MCF 10A (cell line): ENCODE measurements at regions of chr14 and their contacts with region 1.

Region 1: GRCh38 chr14:63852817-63853731 is at the start of gene SYNE2:
- DNase-seq: peak; percentile 77
- H3K4me3 Mint-ChIP-seq: peak within 1 kb of the TSS; percentile 89
- H3K27ac Mint-ChIP-seq: peak within 1 kb of the TSS; percentile 86
- H3K4me1 Mint-ChIP-seq: peaks cover 25% of the 10 kb centered on the region
- H3K27me3 Mint-ChIP-seq: no peaks in the 10 kb centered on the region
- CTCF ChIP-seq: no peak
- total RNA-seq, gene SYNE2: 51.2 and 67.4 TPM in 2 replicates

Region 2: DNA sequence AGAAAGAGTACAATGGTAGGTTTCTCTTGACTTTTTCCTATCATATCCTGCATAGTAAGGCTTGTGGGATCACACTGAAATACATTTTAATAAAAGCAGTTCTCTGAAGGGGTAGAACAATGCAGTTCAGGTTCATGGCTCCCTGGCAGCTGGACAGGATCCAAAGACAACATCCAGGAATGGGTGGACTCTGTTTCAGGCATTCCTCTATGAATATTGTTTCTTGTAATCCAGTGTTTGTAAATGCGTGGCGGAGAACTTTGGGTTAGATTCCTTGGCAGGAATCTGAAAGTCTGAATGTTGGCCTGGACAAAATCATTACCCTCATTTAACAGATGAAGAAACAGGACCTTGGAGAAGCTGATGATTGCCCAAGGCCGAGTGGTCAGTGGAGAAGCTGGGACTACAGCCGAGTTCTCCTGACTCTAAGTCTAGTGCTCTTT is 43.2 kb after region 1 on chr14:
- CTCF ChIA-PET with region 1: no interaction called
- POLR2A ChIA-PET with region 1: interaction called, 14 read pairs
- intact Hi-C with region 1: loop called (anchors 1 kb)
- DNase-seq: peak; percentile 96
- H3K4me3 Mint-ChIP-seq: no peak overlapping the region
- H3K27ac Mint-ChIP-seq: peak overlapping the region; percentile 47
- H3K4me1 Mint-ChIP-seq: peaks cover 43% of the 10 kb centered on the region
- H3K27me3 Mint-ChIP-seq: no peaks in the 10 kb centered on the region
- CTCF ChIP-seq: no peak

Region 3: DNA sequence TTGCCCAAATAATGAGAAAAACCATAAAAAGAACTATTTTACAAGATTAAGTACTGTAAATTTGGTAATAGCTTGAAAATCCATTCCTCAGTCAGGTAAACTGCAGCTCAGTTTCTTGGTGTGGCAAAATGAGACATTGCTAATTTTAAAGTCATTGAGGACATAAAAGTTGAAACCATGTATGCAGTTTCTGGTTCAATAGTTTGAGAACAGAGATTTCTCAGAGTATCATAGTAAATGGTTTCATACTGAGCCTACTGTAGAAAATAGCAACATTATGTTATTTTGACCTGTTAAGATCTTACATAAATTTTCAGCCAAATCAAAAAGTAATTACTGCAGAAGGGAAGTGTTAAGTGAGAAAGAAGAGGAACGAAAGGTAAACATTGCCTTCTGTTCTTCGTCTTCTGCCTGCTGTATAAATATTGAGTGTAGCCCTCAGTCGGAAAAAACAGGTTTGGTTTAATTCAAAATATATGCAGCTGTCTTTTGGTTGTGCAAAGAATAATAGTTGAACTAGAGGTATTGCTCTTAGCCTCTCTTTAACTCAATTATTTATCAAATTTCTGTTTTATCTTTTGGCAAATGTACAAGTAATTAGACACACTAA is 119.4 kb after region 1 on chr14:
- CTCF ChIA-PET with region 1: no interaction called
- POLR2A ChIA-PET with region 1: no interaction called
- intact Hi-C with region 1: no loop called
- DNase-seq: no peak
- H3K4me3 Mint-ChIP-seq: no peak overlapping the region
- H3K27ac Mint-ChIP-seq: no peak overlapping the region
- H3K4me1 Mint-ChIP-seq: no peaks in the 10 kb centered on the region
- H3K27me3 Mint-ChIP-seq: no peaks in the 10 kb centered on the region
- CTCF ChIP-seq: no peak

Region 4: DNA sequence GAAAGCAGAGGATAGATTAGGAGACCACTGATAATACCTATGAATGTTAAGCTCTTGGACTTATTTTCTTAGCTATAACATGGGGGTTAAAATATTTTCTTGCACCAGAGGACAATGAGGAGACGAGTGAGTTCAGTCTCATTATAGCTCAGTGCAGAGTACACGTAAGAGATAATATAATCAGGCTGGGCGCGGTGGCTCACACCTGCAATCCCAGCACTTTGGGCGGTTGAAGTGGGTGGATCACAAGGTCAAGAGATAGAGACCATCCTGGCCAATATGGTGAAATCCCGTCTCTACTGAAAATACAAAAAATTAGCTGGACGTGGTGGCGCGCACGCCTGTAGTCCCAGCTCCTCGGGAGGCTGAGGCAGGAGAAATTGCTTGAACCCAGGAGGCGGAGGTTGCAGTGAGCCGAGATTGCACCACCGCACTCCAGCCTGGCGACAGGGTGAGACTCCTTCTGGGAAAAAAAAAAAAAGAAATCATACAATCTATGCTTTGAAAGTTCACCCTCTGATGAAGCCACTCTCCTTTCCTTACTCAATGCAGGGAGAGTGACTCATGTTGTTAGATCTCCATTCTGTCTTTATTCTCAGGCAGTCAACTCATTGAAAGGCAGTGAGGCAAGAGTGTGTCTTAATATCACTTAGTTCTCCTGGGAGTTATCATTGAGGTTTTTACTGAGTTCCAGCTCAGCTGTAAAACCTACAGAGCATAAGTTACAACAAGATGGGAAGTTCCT is 133.9 kb after region 1 on chr14:
- CTCF ChIA-PET with region 1: interaction called, 5 read pairs
- POLR2A ChIA-PET with region 1: interaction called, 10 read pairs
- intact Hi-C with region 1: loop called (anchors 2 kb)
- DNase-seq: peak; percentile 86
- H3K4me3 Mint-ChIP-seq: no peak overlapping the region
- H3K27ac Mint-ChIP-seq: no peak overlapping the region
- H3K4me1 Mint-ChIP-seq: peaks cover 6% of the 10 kb centered on the region
- H3K27me3 Mint-ChIP-seq: no peaks in the 10 kb centered on the region
- CTCF ChIP-seq: no peak

Region 5: DNA sequence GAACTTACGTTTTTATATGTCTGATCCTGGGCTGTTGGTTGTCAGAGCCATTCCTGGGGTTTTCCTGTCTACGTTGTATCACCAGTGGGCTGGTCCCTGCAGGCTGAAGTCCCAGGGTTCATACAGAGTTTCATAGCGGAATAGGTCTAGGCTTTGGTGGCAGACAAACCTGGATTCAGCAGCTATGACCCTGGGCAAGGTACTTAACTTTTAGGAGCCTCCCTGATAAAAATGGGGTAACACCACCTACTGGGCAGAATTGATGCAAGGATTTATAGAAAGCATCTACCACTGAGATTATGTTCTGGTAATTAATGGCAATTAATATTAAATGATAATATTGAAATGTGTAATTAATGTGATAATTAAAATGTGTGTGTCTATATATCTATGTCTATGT is 140.9 kb after region 1 on chr14:
- CTCF ChIA-PET with region 1: interaction called, 4 read pairs
- POLR2A ChIA-PET with region 1: interaction called, 10 read pairs
- intact Hi-C with region 1: loop called (anchors 1 kb)
- DNase-seq: peak; percentile 18
- H3K4me3 Mint-ChIP-seq: no peak overlapping the region
- H3K27ac Mint-ChIP-seq: no peak overlapping the region
- H3K4me1 Mint-ChIP-seq: peaks cover 11% of the 10 kb centered on the region
- H3K27me3 Mint-ChIP-seq: no peaks in the 10 kb centered on the region
- CTCF ChIP-seq: peak; percentile 34